HCT116 (cell line): ENCODE measurements at regions of chr1 and their contacts with region 1.

Region 1: GRCh38 chr1:93304716-93305138 is 41.0 kb upstream of the DR1 start:
- DNase-seq: peak; percentile 35
- ATAC-seq: peak; percentile 77
- H3K4me3 ChIP-seq: no peak overlapping the region
- H3K27ac ChIP-seq: no peak overlapping the region
- H3K4me1 ChIP-seq: no peaks in the 10 kb centered on the region
- H3K27me3 ChIP-seq: no peaks in the 10 kb centered on the region
- CTCF ChIP-seq: peak; percentile 61 to 93 (median 78); a peak in 5 of 6 replicates
- POLR2A ChIP-seq: no peak
- RAD21 ChIP-seq: peak; percentile 87

Region 2: GRCh38 chr1:93317207-93317606 is 12.5 kb after region 1 on chr1:
- CTCF ChIA-PET with region 1: interaction called, 11 read pairs
- POLR2A ChIA-PET with region 1: no interaction called
- RAD21 ChIA-PET with region 1: no interaction called
- intact Hi-C with region 1: no loop called
- DNase-seq: no peak
- ATAC-seq: no peak
- H3K4me3 ChIP-seq: no peak overlapping the region
- H3K27ac ChIP-seq: no peak overlapping the region
- H3K4me1 ChIP-seq: no peaks in the 10 kb centered on the region; a peak in 1 of 4 replicates
- H3K27me3 ChIP-seq: no peaks in the 10 kb centered on the region
- CTCF ChIP-seq: no peak
- POLR2A ChIP-seq: no peak
- RAD21 ChIP-seq: no peak

Region 3: GRCh38 chr1:93437976-93438605 is 133.4 kb after region 1 on chr1:
- CTCF ChIA-PET with region 1: interaction called, 5 read pairs
- POLR2A ChIA-PET with region 1: no interaction called
- RAD21 ChIA-PET with region 1: no interaction called
- intact Hi-C with region 1: loop called (anchors 5 kb)
- DNase-seq: no peak
- ATAC-seq: peak; percentile 37; the same call in 1 of the 2 replicates
- H3K4me3 ChIP-seq: no peak overlapping the region
- H3K27ac ChIP-seq: no peak overlapping the region
- H3K4me1 ChIP-seq: peaks cover 22 to 32% of the 10 kb centered on the region in 2 experiments
- H3K27me3 ChIP-seq: no peaks in the 10 kb centered on the region
- CTCF ChIP-seq: peak; percentile 38 to 78 (median 78); a peak in 4 of 6 replicates
- POLR2A ChIP-seq: no peak
- RAD21 ChIP-seq: peak; percentile 90

Region 4: GRCh38 chr1:93448292-93448982 is 143.7 kb after region 1 on chr1:
- CTCF ChIA-PET with region 1: no interaction called
- POLR2A ChIA-PET with region 1: no interaction called
- RAD21 ChIA-PET with region 1: no interaction called
- intact Hi-C with region 1: no loop called
- DNase-seq: no peak
- ATAC-seq: peak; percentile 67
- H3K4me3 ChIP-seq: peak overlapping the region; percentile 64 to 86
- H3K27ac ChIP-seq: peak overlapping the region; percentile 84
- H3K4me1 ChIP-seq: peaks cover 5 to 26% of the 10 kb centered on the region in 2 experiments; a peak in 3 of 4 replicates
- H3K27me3 ChIP-seq: no peaks in the 10 kb centered on the region
- CTCF ChIP-seq: 0 out of 6 replicates have a peak, but pooled peaks of 1 of the 3 experiments have one; percentile 9
- POLR2A ChIP-seq: no peak
- RAD21 ChIP-seq: no peak

Region 5: GRCh38 chr1:93615582-93616150 is 310.9 kb after region 1 on chr1:
- CTCF ChIA-PET with region 1: interaction called, 11 read pairs
- POLR2A ChIA-PET with region 1: no interaction called
- RAD21 ChIA-PET with region 1: no interaction called
- intact Hi-C with region 1: no loop called
- DNase-seq: no peak
- ATAC-seq: peak; percentile 75
- H3K4me3 ChIP-seq: peak overlapping the region in 1 of 2 experiments; percentile 17; a peak in 1 of 4 replicates
- H3K27ac ChIP-seq: peak overlapping the region; percentile 62
- H3K4me1 ChIP-seq: peaks cover 42 to 64% of the 10 kb centered on the region in 2 experiments
- H3K27me3 ChIP-seq: no peaks in the 10 kb centered on the region
- CTCF ChIP-seq: no peak
- POLR2A ChIP-seq: no peak
- RAD21 ChIP-seq: no peak

Region 6: DNA sequence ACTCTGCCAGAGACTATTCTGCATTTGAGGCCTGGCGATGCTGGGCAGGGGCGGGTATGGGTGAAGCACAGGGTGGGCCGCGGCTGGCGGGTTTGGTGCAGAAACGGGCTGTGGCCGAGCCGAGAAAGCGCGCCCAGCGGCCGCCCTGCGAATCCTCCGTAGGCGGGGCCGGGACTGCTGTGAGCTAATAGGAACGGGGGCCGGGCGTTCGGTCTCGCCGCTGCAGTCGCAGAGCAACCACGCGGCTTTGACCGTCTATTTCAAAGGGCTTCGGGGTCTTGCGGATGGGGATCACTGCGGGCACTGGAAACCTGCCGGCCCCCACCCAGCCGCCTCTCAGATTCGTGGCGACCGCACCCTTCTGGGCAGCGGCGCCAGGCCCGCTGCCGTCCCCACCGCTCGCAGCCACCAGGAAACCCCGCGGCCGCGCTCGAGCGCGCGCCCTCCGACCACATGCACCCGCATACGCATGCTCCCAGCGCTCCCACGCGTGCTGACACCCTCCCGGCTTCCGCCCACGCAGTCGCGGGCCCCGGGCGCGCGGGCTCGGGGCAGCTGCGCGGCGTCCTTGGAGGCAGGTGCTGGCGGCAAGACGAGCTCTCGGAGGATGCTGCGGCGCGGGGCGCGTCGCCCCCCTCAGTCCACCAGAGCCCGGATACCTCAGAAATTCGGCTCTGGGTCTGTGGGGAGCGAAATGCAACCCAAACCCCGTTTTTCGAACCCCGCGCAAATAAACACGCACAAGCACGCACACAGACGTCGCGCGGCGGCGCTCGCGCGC is 541.7 kb after region 1 on chr1:
- CTCF ChIA-PET with region 1: interaction called, 15 read pairs
- POLR2A ChIA-PET with region 1: no interaction called
- RAD21 ChIA-PET with region 1: no interaction called
- intact Hi-C with region 1: loop called (anchors 2 kb)
- DNase-seq: peak; percentile 53
- ATAC-seq: peak; percentile 67
- H3K4me3 ChIP-seq: peak overlapping the region; percentile 59 to 79
- H3K27ac ChIP-seq: peak overlapping the region; percentile 69
- H3K4me1 ChIP-seq: peaks cover 7 to 33% of the 10 kb centered on the region in 2 experiments; a peak in 3 of 4 replicates
- H3K27me3 ChIP-seq: no peaks in the 10 kb centered on the region
- CTCF ChIP-seq: peak in 1 of 3 experiments; percentile 32; a peak in 2 of 6 replicates
- POLR2A ChIP-seq: peak; percentile 36
- RAD21 ChIP-seq: no peak